ENCODE measurements at regions of chr6 and their contacts with region 1.

Region 1: GRCh38 chr6:155795173-155795796 is 339.6 kb upstream of the NOX3 start:
- DNase-seq: peak; percentile 20
- H3K4me3 Mint-ChIP-seq: no peak overlapping the region
- H3K27ac Mint-ChIP-seq: peak overlapping the region; percentile 90
- H3K4me1 Mint-ChIP-seq: peaks cover 35% of the 10 kb centered on the region
- H3K27me3 Mint-ChIP-seq: no peaks in the 10 kb centered on the region
- CTCF ChIP-seq: no peak

Region 2: GRCh38 chr6:155861821-155862220 is 66.5 kb after region 1 on chr6:
- CTCF ChIA-PET with region 1: no interaction called
- intact Hi-C with region 1: no loop called
- DNase-seq: no peak
- H3K4me3 Mint-ChIP-seq: no peak overlapping the region
- H3K27ac Mint-ChIP-seq: no peak overlapping the region
- H3K4me1 Mint-ChIP-seq: peaks cover 8% of the 10 kb centered on the region
- H3K27me3 Mint-ChIP-seq: no peaks in the 10 kb centered on the region
- CTCF ChIP-seq: no peak

Region 3: GRCh38 chr6:155882527-155883333 is 87.4 kb after region 1 on chr6:
- CTCF ChIA-PET with region 1: no interaction called
- intact Hi-C with region 1: loop called (anchors 5 kb)
- DNase-seq: peak; percentile 8
- H3K4me3 Mint-ChIP-seq: peak overlapping the region; percentile 16
- H3K27ac Mint-ChIP-seq: peak overlapping the region; percentile 78
- H3K4me1 Mint-ChIP-seq: peaks cover 37% of the 10 kb centered on the region
- H3K27me3 Mint-ChIP-seq: no peaks in the 10 kb centered on the region
- CTCF ChIP-seq: no peak